PC-3 (cell line): ENCODE measurements at regions of chr4 and their contacts with region 1.

Region 1: GRCh38 chr4:64623346-64623745 is 214.1 kb upstream of the TECRL start:
- DNase-seq: peak; percentile 17
- ATAC-seq: no peak; the same call in 1 of the 2 replicates
- H3K4me3 ChIP-seq: no peak overlapping the region
- H3K27ac ChIP-seq: no peak overlapping the region
- H3K4me1 ChIP-seq: peaks cover 17% of the 10 kb centered on the region; the same call in 1 of the 2 replicates
- H3K27me3 ChIP-seq: no peaks in the 10 kb centered on the region
- CTCF ChIP-seq: no peak

Region 2: DNA sequence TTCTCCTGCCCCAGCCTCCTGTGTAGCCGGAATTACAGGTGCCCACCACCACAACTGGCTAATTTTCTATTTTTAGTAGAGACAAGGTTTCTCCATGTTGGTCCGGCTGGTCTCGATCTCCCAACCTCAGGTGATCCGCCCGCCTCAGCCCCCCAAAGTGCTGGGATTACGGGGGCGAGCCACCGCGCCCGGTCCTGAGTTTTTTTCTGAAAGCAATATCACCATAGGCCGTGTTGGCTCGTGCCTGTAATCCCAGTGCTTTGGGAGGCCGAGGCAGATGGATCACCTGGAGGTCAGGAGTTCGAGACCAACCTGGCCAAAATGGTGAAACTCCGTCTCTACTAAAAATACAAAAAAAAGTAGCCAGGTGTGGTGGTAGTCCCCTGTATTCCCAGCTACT is 77.8 kb before region 1 on chr4:
- CTCF ChIA-PET with region 1: no interaction called
- POLR2A ChIA-PET with region 1: no interaction called
- intact Hi-C with region 1: no loop called
- DNase-seq: no peak
- ATAC-seq: no peak
- H3K4me3 ChIP-seq: no peak overlapping the region
- H3K27ac ChIP-seq: no peak overlapping the region
- H3K4me1 ChIP-seq: no peaks in the 10 kb centered on the region
- H3K27me3 ChIP-seq: no peaks in the 10 kb centered on the region
- CTCF ChIP-seq: no peak

Region 3: GRCh38 chr4:65393078-65393477 is 769.7 kb after region 1 on chr4:
- CTCF ChIA-PET with region 1: no interaction called
- POLR2A ChIA-PET with region 1: no interaction called
- intact Hi-C with region 1: loop called (anchors 10 kb)
- DNase-seq: no peak
- ATAC-seq: peak; percentile 29
- H3K4me3 ChIP-seq: no peak overlapping the region
- H3K27ac ChIP-seq: no peak overlapping the region
- H3K4me1 ChIP-seq: no peaks in the 10 kb centered on the region
- H3K27me3 ChIP-seq: no peaks in the 10 kb centered on the region
- CTCF ChIP-seq: no peak